ENCODE measurements at regions of chr2 and their contacts with region 1.

Region 1: DNA sequence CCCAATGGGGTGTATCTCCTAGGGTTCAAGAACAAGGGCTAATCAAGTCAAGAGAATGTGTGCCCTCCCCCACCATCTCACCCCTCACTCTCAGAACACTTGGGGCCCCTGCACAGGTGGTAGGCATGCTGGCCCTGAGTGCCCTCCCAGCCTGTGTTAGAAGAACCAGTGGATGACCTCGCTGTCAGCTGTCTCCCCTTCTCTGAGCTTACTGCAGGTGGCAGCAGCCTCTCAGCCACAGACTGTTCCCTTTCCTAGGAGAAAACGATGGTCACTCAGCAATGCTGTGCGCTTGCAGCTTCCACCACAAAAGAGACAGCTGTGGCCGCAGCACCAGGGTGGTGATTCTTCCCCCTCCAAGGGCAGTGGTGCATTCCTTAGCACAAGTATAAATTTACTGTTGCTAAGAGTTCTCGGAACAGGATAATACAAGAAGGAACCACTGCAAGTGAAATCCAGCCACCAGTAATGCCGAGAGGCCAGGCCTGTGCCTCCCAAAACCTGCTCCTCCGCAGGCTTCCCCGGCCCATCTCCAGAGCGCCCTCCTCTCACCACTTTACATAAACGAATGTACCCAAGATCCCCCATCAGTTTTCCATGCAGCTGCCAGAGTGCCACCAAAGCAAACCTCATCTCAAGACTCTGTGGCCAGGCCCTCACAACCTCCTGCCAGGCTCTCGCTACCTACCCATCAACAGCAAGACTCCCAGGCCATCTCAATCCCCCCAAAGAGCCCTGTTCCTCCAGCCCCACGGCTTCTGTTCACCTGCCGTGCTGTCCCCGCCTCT is 935 bp upstream of the RAMP1 start:
- DNase-seq: peak; percentile 60
- H3K4me3 ChIP-seq: no peak overlapping the region
- H3K27ac ChIP-seq: no peak overlapping the region
- H3K4me1 ChIP-seq: peaks cover 7% of the 10 kb centered on the region
- H3K27me3 ChIP-seq: no peaks in the 10 kb centered on the region
- CTCF ChIP-seq: peak; percentile 89 to 97

Region 2: GRCh38 chr2:237685408-237685807 is 173.1 kb before region 1 on chr2:
- CTCF ChIA-PET with region 1: no interaction called
- dilution Hi-C with region 1: no loop called
- in situ Hi-C with region 1: no loop called
- intact Hi-C with region 1: no loop called
- DNase-seq: no peak
- H3K4me3 ChIP-seq: no peak overlapping the region
- H3K27ac ChIP-seq: no peak overlapping the region
- H3K4me1 ChIP-seq: peaks cover 31% of the 10 kb centered on the region
- H3K27me3 ChIP-seq: no peaks in the 10 kb centered on the region
- CTCF ChIP-seq: peak; percentile 15 to 50

Region 3: DNA sequence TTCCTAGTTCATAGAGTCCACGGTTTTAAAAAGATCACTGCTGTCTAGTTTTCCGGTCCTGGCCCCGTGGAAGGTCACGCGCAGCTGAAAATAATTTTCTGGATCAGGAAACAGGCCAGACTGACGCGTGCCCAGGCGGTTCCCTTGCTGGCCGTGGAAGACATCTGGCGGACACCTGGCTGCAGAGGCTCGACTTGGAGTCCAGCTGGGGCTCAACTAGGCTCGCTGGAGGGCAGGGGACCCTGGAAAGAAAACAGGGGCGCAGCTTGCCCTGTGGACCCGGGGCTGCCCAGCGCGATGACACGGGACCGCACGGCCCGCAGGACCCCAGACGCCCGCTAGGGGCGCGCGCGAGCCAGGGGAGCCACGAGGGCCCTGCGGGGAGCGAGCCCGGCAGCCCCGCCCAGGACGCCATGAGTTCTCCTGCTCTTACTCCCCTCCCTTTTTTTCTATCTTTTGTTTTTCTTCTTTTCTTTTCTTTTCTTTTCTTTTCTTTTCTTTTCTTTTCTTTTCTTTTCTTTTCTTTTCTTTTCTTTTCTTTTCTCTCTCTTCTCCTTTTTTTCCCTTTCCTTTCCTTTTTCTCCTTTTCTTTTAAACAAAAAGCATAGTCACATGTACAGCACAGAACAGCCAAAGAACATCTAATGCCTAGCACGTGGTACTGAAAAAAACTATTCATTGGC is 65.1 kb after region 1 on chr2:
- CTCF ChIA-PET with region 1: no interaction called
- dilution Hi-C with region 1: no loop called
- in situ Hi-C with region 1: no loop called
- intact Hi-C with region 1: loop called (anchors 2 kb)
- DNase-seq: peak; percentile 29
- H3K4me3 ChIP-seq: no peak overlapping the region
- H3K27ac ChIP-seq: no peak overlapping the region
- H3K4me1 ChIP-seq: peaks cover 14% of the 10 kb centered on the region
- H3K27me3 ChIP-seq: no peaks in the 10 kb centered on the region
- CTCF ChIP-seq: peak; percentile 51 to 55

Region 4: DNA sequence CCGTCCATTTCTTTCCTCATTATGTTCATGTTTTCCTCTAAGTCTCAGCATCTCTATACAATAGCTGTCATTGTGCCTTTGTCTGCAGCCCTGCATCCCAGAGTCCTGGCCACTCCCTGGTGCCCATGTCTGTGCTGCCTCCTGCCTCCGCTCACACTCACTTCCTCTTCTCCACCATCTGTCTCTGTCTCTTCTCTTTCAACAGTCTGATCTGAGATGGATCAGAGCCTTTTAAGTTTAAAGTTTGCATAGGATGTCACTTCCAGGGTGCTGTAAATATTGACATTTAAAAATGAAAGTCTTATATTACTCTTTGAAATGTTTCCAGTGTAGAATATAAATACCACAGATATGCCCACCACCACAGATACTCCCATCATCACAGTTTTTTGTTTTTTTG is 151.1 kb after region 1 on chr2:
- CTCF ChIA-PET with region 1: no interaction called
- dilution Hi-C with region 1: no loop called
- in situ Hi-C with region 1: no loop called
- intact Hi-C with region 1: no loop called
- DNase-seq: no peak
- H3K4me3 ChIP-seq: no peak overlapping the region
- H3K27ac ChIP-seq: no peak overlapping the region
- H3K4me1 ChIP-seq: peaks cover 8% of the 10 kb centered on the region
- H3K27me3 ChIP-seq: no peaks in the 10 kb centered on the region
- CTCF ChIP-seq: no peak

Region 5: DNA sequence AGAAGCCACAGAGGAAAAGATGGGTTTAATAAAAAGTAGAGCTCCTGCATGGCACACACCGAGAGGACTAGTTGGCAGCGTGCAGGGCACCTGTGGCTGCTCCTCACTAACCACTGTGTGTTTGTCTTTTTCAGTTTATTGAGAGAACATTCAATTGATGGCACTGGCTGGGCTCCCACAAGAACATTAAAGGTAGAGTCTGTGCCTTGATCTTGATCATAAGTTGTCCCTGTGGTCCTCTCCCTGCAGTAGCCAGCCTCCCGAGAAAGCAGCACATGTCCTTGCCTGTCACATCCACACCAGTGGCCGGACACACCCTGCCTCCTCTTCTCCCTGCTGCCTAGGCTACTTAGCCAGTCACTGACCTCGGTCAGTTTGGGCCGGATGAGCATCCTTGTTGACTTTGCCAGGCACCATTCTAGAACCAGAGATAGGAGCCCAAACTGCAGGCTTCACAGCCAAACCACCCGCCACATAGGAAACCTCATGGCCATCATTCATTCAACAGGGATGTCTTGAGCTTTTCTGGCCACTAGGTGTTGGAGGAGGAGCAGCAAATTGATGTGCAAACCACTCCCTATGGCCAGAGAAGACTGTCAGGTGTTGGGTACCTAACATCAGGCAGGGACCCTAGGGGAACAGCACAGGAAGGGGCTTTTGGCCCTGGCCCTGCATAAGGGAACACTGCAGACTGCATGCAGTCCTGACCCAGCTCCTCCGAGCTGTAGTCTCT is 172.1 kb after region 1 on chr2:
- CTCF ChIA-PET with region 1: interaction called, 4 read pairs
- dilution Hi-C with region 1: no loop called
- in situ Hi-C with region 1: no loop called
- intact Hi-C with region 1: loop called (anchors 5 kb)
- DNase-seq: no peak
- H3K4me3 ChIP-seq: no peak overlapping the region
- H3K27ac ChIP-seq: no peak overlapping the region
- H3K4me1 ChIP-seq: peaks cover 25% of the 10 kb centered on the region
- H3K27me3 ChIP-seq: no peaks in the 10 kb centered on the region
- CTCF ChIP-seq: peak in 1 of 2 donors; percentile 16

Region 6: GRCh38 chr2:238081150-238081549 is 222.7 kb after region 1 on chr2:
- CTCF ChIA-PET with region 1: no interaction called
- dilution Hi-C with region 1: no loop called
- in situ Hi-C with region 1: no loop called
- intact Hi-C with region 1: no loop called
- DNase-seq: no peak
- H3K4me3 ChIP-seq: no peak overlapping the region
- H3K27ac ChIP-seq: no peak overlapping the region
- H3K4me1 ChIP-seq: no peaks in the 10 kb centered on the region
- H3K27me3 ChIP-seq: no peaks in the 10 kb centered on the region
- CTCF ChIP-seq: no peak

Region 7: GRCh38 chr2:238139196-238140039 is 280.9 kb after region 1 on chr2:
- CTCF ChIA-PET with region 1: no interaction called
- dilution Hi-C with region 1: loop called (anchors 5 kb)
- in situ Hi-C with region 1: no loop called
- intact Hi-C with region 1: loop called (anchors 1 kb)
- DNase-seq: no peak
- H3K4me3 ChIP-seq: no peak overlapping the region
- H3K27ac ChIP-seq: no peak overlapping the region
- H3K4me1 ChIP-seq: peaks cover 42% of the 10 kb centered on the region
- H3K27me3 ChIP-seq: no peaks in the 10 kb centered on the region
- CTCF ChIP-seq: no peak

Region 8: GRCh38 chr2:238263204-238264071 is 404.9 kb after region 1 on chr2:
- CTCF ChIA-PET with region 1: interaction called, 4 read pairs
- dilution Hi-C with region 1: no loop called
- in situ Hi-C with region 1: loop called in 1 of 2 experiments (anchors 25 kb)
- intact Hi-C with region 1: loop called (anchors 1 kb)
- DNase-seq: peak; percentile 67
- H3K4me3 ChIP-seq: no peak overlapping the region
- H3K27ac ChIP-seq: no peak overlapping the region
- H3K4me1 ChIP-seq: peaks cover 22% of the 10 kb centered on the region
- H3K27me3 ChIP-seq: no peaks in the 10 kb centered on the region
- CTCF ChIP-seq: peak; percentile 78 to 79